ENCODE measurements at regions of chr7 and their contacts with region 1.

Region 1: DNA sequence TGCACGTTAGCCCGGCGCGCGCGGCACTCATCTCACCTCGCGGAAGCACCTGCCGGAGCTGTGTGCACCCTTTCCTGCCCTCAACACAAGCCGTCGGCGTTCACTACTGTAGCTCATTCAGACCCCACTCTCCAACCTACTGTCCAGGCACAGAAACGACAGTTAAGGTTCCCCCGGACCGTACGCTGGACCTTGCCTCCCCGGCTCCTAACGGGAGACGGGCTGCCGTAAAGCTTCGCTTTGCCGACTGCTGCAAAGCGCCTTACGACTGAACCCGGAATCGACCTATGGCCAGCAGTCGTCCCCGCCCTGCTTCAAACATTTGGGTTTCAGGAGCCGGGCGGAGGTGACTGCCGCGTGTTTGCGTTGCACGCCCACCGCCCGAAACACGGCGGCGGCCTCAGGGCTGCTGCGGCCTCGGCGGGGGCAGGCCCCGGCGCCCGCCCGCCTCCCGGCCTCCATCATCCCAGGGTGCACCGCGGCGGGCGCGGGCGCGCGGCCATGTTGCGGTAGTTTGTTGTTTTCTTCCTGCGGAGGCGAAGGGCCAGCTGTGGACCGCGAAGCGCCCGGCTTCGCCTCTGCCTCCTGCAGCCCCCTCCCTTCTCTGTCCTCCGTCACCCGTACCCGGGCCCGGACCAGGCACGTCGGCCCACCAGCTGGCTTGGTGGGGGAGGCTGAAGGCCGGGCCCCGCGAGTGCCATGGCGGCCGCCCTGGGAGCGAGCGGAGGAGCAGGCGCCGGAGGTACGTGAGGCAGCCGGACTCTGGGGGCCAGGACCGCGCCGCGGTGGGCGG is at the start of gene RBM33:
- DNase-seq: peak; percentile 89
- ATAC-seq: peak; percentile 92
- H3K4me3 Mint-ChIP-seq: peak within 1 kb of the TSS; percentile 96
- H3K27ac Mint-ChIP-seq: peak within 1 kb of the TSS; percentile 100
- H3K4me1 Mint-ChIP-seq: peaks cover 44% of the 10 kb centered on the region
- H3K27me3 Mint-ChIP-seq: no peaks in the 10 kb centered on the region
- total RNA-seq, gene RBM33: 67.6 to 81.1 TPM

Region 2: DNA sequence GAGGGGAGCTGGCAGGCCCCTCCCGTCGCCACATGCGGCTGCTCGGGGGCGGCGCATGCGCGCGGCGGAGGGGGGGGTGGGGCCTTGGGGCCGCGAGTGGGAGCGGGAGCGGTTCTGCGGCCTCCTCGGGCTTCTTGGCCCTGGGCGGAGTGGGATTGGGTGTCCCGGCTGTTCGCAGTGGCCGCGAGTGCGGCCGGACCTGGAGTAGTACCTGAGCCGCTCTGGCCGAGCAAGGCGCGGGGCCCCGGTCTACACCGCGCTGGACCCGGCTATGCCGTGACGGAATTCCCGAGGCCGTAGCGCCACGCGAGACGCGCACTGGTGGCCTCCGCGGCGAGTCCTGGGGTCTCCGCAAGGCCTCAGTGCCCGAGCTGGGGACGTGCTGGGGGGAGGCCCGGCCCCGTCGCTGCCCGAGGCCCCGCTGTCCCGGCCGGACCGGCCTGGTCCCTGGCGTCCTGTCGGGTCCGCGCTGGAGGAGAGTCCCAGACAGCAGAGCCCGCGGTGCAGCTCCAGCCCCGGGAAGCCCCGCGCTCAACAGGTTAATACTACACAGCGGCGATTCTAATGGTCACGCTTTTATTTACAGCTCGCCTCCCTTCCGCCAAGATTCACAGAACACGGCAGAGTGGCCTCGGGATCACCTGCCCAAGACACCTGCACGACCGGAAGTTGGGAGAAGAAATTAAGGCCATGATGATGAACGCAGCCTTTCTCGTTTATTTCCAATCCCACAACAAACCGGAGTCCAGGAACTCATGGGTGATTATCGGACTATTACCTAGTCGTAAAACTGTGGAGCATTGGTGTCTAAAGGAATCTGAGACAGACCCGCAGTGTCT is 640.8 kb before region 1 on chr7:
- CTCF ChIA-PET with region 1: no interaction called
- POLR2A ChIA-PET with region 1: no interaction called
- intact Hi-C with region 1: loop called in 1 of 2 experiments (anchors 1 kb)
- DNase-seq: peak; percentile 91
- ATAC-seq: peak; percentile 82
- H3K4me3 Mint-ChIP-seq: peak overlapping the region; percentile 91
- H3K27ac Mint-ChIP-seq: peak overlapping the region; percentile 85
- H3K4me1 Mint-ChIP-seq: peaks cover 12% of the 10 kb centered on the region
- H3K27me3 Mint-ChIP-seq: no peaks in the 10 kb centered on the region

Region 3: DNA sequence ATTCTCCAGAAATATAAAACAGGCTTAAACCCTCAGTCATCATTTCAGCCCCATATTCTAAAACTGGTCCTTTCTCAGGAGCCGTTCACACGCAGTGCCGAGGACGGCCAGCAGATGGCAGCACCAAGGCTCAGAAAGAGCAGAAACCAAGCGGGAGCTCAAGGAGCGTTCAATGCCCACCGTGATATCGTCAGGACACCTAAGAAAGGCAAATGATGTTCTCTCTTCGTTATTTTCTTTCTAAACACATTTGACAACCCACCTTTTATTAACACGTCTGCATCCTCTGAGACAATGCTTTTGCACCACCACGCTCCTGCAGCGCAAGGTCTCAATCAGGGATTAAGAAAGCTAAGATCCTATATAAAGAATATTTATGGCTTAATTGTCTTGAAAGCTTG is 45.6 kb before region 1 on chr7:
- CTCF ChIA-PET with region 1: interaction called, 11 read pairs
- POLR2A ChIA-PET with region 1: interaction called, 5 read pairs
- intact Hi-C with region 1: loop called in 1 of 2 experiments (anchors 2 kb)
- DNase-seq: peak; percentile 91
- ATAC-seq: peak; percentile 78
- H3K4me3 Mint-ChIP-seq: no peak overlapping the region
- H3K27ac Mint-ChIP-seq: no peak overlapping the region
- H3K4me1 Mint-ChIP-seq: peaks cover 9% of the 10 kb centered on the region
- H3K27me3 Mint-ChIP-seq: peaks cover 27% of the 10 kb centered on the region

Region 4: GRCh38 chr7:155738652-155739537 is 94.5 kb after region 1 on chr7:
- CTCF ChIA-PET with region 1: no interaction called
- POLR2A ChIA-PET with region 1: no interaction called
- intact Hi-C with region 1: loop called (anchors 1 to 10 kb)
- DNase-seq: peak; percentile 85
- ATAC-seq: peak; percentile 68
- H3K4me3 Mint-ChIP-seq: peak overlapping the region; percentile 21
- H3K27ac Mint-ChIP-seq: peak overlapping the region; percentile 72
- H3K4me1 Mint-ChIP-seq: peaks cover 64% of the 10 kb centered on the region
- H3K27me3 Mint-ChIP-seq: no peaks in the 10 kb centered on the region

Region 5: DNA sequence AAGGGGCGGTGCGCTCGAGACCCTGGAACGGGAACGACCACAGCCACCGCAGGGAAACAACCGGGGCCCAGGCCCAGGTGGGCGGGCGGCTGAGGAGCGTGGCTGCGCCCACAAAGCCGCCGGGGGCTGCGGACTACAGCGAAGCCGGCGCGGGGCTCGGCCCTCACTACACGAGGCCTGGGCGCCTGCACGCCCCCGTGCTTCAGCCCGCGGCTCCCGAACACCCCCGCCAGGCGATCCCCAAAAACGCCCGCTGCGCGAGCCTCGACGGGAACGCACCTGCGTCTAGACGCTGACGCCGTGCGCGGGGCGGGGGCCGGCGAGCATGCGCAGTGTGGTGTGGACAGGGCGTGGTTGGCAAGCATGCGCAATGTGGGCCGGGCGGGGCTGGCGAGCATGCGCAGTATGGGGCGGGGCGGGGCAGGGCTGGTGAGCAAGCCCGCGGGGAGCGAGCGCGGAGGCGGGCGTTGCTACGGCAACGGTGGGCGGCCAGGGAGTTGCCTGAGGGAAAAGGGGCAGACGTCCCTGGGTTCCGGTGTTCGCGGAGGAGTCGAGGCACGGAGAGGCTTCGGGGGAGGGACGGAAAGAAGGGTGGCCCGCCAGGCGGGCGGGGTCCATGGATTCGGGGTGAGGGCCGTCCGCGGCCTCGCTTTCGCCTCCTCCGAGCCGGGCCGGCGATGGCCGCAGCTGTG is 996.0 kb after region 1 on chr7 and contains the start of gene RNF32:
- CTCF ChIA-PET with region 1: no interaction called
- POLR2A ChIA-PET with region 1: no interaction called
- intact Hi-C with region 1: loop called in 1 of 2 experiments (anchors 1 kb)
- DNase-seq: peak; percentile 100
- ATAC-seq: peak; percentile 90
- H3K4me3 Mint-ChIP-seq: peak within 1 kb of the TSS; percentile 76
- H3K27ac Mint-ChIP-seq: peak within 1 kb of the TSS; percentile 87
- H3K4me1 Mint-ChIP-seq: peaks cover 15% of the 10 kb centered on the region
- H3K27me3 Mint-ChIP-seq: peaks cover 29% of the 10 kb centered on the region
- total RNA-seq, gene RNF32: 0.71 to 0.90 TPM

Region 6: DNA sequence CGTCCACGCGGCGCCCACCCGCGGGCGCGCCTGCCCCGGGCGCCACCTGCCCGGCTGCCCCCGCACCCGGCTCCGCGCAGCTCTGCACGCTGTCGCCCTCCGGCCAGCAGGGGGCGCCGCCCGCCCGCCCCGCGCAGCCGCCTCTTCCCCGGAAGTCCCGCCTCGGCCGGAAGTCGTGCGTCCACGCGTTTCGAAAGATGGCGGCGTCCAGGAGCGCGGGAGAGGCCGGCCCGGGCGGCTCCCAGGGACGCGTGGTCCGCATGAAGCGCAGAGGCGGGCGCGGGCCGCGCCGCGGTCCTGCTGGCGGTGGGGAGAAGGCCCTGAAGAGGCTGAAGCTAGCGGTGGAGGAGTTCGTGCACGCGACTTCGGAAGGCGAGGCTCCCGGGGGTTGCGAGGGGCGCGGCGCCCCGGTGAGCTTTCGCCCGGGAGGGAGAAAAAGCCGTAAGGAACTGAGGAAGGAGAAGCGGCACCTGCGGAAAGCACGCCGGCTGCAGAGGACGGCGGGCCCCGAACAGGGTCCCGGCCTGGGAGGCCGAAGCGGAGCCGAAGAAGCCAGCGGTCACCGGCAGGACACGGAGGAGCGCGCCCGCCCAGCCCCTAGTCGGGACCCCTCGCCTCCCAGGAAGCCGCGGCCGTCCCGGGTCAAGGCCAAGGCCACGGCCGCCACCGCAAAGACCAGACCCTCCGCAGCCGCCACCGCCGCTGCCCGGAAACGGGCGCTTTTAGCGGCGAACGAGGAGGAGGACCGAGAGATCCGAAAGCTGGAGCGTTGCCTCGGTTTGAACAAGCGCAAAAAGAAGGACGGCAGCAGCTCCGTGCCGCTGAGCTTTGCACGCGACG is 1305.4 kb after region 1 on chr7 and contains the start of gene NOM1:
- CTCF ChIA-PET with region 1: no interaction called
- POLR2A ChIA-PET with region 1: no interaction called
- intact Hi-C with region 1: loop called in 1 of 2 experiments (anchors 1 kb)
- DNase-seq: peak; percentile 95
- ATAC-seq: peak; percentile 92
- H3K4me3 Mint-ChIP-seq: peak within 1 kb of the TSS; percentile 94
- H3K27ac Mint-ChIP-seq: peak within 1 kb of the TSS; percentile 84
- H3K4me1 Mint-ChIP-seq: peaks cover 26% of the 10 kb centered on the region
- H3K27me3 Mint-ChIP-seq: peaks cover 5% of the 10 kb centered on the region
- total RNA-seq, gene NOM1: 27.3 to 32.1 TPM

Measured in activated CD4-positive, alpha-beta T cell treated with anti-CD3 and anti-CD28 coated beads for 36 hours (primary cell).